ENCODE measurements at regions of chr9 and their contacts with region 1.

Region 1: DNA sequence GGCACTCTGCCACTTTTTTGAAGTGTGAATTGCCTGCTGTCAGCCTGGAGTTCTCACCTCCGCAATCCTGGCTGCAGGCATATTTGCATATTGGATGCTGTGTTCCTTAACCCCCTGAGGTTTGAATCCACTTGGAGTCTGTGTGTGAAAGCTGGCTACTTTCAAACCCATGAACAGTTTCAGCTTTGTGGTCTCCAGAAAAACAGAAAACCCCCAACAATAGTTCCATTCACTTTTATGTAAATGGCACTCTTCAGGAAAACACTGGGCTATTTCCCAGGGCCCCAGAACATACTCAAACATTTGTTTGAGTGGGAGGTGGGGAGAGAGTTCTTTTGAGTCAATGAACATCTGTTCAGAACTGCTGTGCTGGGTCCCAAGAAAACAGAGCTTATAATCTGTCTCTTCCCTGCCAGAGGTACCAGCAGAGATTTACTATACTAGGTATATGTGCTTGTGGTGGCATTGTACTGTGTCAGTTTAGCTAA is 5.0 kb downstream of the NUDT2 start:
- DNase-seq: no peak
- ATAC-seq: peak in 1 of 8 donors; percentile 8
- H3K4me3 ChIP-seq: no peak overlapping the region
- H3K27ac ChIP-seq: peak overlapping the region in 3 of 10 donors; percentile 7 to 43 (median 28)
- H3K4me1 ChIP-seq: peaks cover 0 to 52% (median 29%) of the 10 kb centered on the region in 9 donors
- H3K27me3 ChIP-seq: no peaks in the 10 kb centered on the region
- CTCF ChIP-seq: no peak

Region 2: GRCh38 chr9:34279411-34279810 is 55.0 kb before region 1 on chr9:
- intact Hi-C with region 1: no loop called
- DNase-seq: no peak
- ATAC-seq: peak in 1 of 8 donors; percentile 18
- H3K4me3 ChIP-seq: no peak overlapping the region
- H3K27ac ChIP-seq: peak overlapping the region in 1 of 10 donors; percentile 29
- H3K4me1 ChIP-seq: peaks cover 0 to 8% (median 0%) of the 10 kb centered on the region in 9 donors
- H3K27me3 ChIP-seq: no peaks in the 10 kb centered on the region
- CTCF ChIP-seq: no peak

Region 3: DNA sequence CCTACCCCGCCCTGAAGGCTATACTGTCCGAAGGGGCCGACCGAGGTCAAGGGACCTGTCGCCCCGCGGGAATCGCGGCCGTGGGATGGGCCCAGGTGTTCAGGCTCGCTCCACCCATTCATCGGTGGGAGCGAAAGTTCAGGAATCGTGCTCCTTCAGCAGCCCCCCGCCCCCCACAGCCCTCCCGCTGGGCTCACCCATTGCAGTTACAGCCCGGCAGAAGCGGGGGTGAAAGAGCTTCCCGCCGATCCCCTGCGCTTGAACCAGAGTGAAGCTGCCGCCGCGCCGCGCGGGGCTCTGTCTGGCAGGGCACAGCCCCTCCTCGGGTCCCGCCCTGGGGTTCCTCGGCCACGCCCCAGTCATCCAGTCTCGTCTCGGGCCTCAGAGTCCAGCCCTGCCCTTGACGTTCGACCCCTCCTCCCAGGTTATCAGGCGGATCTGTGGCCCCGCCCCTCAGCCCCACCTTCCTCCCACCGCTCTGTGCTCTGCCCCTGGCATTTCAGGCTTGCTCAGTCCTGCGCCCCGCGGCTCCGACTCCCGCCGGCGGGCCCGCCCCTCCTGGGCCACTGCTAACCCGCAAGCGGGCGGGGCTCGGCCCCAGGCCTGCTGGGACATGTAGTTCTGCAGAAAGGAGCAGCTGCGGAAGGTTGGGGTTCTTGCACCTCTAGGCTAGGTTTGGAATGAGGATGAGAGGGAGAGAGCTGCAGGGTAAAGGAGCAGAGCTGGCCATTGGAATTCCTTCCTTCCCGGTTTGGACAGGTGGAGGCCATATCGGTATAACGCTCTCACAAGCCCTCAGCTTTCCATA is 42.4 kb after region 1 on chr9 and contains the start of gene MYORG:
- intact Hi-C with region 1: loop called (anchors 1 to 5 kb)
- DNase-seq: peak; percentile 92 to 94
- ATAC-seq: peak; percentile 77 to 89 (median 84)
- H3K4me3 ChIP-seq: peak within 1 kb of the TSS; percentile 55 to 92 (median 80)
- H3K27ac ChIP-seq: peak within 1 kb of the TSS; percentile 35 to 88 (median 75)
- H3K4me1 ChIP-seq: peaks cover 6 to 53% (median 39%) of the 10 kb centered on the region in 9 donors
- H3K27me3 ChIP-seq: peaks cover 0 to 7% (median 0%) of the 10 kb centered on the region in 7 donors
- CTCF ChIP-seq: no peak
- total RNA-seq, gene MYORG: 4.9 to 9.1 (median 7.1) TPM